ENCODE measurements at regions of chr9 and their contacts with region 1.

Region 1: DNA sequence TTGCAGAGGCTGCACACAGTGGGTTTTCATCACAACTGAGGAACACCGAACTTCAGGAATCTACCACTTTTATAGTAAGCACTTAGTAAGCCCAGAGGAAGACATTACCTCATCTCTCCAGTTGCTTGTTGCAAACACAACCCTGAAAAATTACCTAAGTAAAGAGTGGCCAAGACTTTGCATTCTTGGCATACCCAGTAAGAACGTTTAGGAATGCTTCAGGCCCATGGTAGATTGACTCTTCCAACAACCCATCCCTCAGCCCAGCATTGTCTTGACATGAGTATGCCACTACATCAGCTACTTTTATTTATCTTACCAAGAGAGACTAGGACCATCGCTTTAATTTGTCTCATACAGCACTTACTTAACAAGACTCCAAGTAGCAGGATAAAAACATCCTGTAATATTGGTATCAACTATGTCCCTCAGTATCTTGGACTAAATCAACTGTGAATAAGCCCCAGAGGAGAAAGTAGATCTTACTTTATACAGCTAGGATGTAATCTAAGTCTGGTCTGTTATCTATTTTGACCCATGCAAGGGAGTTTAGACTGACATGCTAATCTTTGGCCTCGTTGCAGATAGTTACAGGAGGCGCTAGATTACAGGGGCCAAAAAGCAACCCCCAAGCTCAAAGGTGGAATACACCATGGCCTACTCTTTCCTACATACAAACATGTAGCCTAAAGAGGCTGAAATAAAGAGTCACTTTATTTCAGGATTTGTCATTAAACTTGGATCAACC is 114.9 kb downstream of the INVS start:
- DNase-seq: no peak
- ATAC-seq: no peak
- H3K4me3 ChIP-seq: no peak overlapping the region
- H3K4me3 Mint-ChIP-seq: no peak overlapping the region
- H3K27ac ChIP-seq: no peak overlapping the region
- H3K27ac Mint-ChIP-seq: no peak overlapping the region
- H3K4me1 ChIP-seq: no peaks in the 10 kb centered on the region
- H3K4me1 Mint-ChIP-seq: peaks cover 8 to 11% (median 10%) of the 10 kb centered on the region in 3 donors
- H3K27me3 ChIP-seq: no peaks in the 10 kb centered on the region
- H3K27me3 Mint-ChIP-seq: no peaks in the 10 kb centered on the region

Region 2: GRCh38 chr9:100111235-100111634 is 102.7 kb before region 1 on chr9:
- CTCF ChIA-PET with region 1: no interaction called
- POLR2A ChIA-PET with region 1: interaction called in 1 of 2 experiments, 17 read pairs
- DNase-seq: no peak
- ATAC-seq: no peak
- H3K4me3 ChIP-seq: no peak overlapping the region
- H3K4me3 Mint-ChIP-seq: no peak overlapping the region
- H3K27ac ChIP-seq: no peak overlapping the region
- H3K27ac Mint-ChIP-seq: no peak overlapping the region
- H3K4me1 ChIP-seq: no peaks in the 10 kb centered on the region
- H3K4me1 Mint-ChIP-seq: peaks cover 7 to 13% (median 10%) of the 10 kb centered on the region in 3 donors
- H3K27me3 ChIP-seq: no peaks in the 10 kb centered on the region
- H3K27me3 Mint-ChIP-seq: no peaks in the 10 kb centered on the region

Region 3: GRCh38 chr9:100196215-100196614 is 17.7 kb before region 1 on chr9:
- CTCF ChIA-PET with region 1: no interaction called
- POLR2A ChIA-PET with region 1: no interaction called
- DNase-seq: no peak
- ATAC-seq: no peak
- H3K4me3 ChIP-seq: no peak overlapping the region
- H3K4me3 Mint-ChIP-seq: no peak overlapping the region
- H3K27ac ChIP-seq: no peak overlapping the region
- H3K27ac Mint-ChIP-seq: no peak overlapping the region
- H3K4me1 ChIP-seq: no peaks in the 10 kb centered on the region
- H3K4me1 Mint-ChIP-seq: no peaks in the 10 kb centered on the region
- H3K27me3 ChIP-seq: no peaks in the 10 kb centered on the region
- H3K27me3 Mint-ChIP-seq: no peaks in the 10 kb centered on the region

Region 4: GRCh38 chr9:100309992-100310391 is 96.1 kb after region 1 on chr9:
- CTCF ChIA-PET with region 1: no interaction called
- POLR2A ChIA-PET with region 1: no interaction called
- DNase-seq: no peak
- ATAC-seq: no peak
- H3K4me3 ChIP-seq: no peak overlapping the region
- H3K4me3 Mint-ChIP-seq: no peak overlapping the region
- H3K27ac ChIP-seq: no peak overlapping the region
- H3K27ac Mint-ChIP-seq: no peak overlapping the region
- H3K4me1 ChIP-seq: no peaks in the 10 kb centered on the region
- H3K4me1 Mint-ChIP-seq: peaks cover 26 to 31% (median 30%) of the 10 kb centered on the region in 3 donors
- H3K27me3 ChIP-seq: no peaks in the 10 kb centered on the region
- H3K27me3 Mint-ChIP-seq: no peaks in the 10 kb centered on the region

Region 5: GRCh38 chr9:100394816-100395215 is 180.9 kb after region 1 on chr9:
- CTCF ChIA-PET with region 1: no interaction called
- POLR2A ChIA-PET with region 1: no interaction called
- DNase-seq: no peak
- ATAC-seq: no peak
- H3K4me3 ChIP-seq: no peak overlapping the region
- H3K4me3 Mint-ChIP-seq: no peak overlapping the region
- H3K27ac ChIP-seq: no peak overlapping the region
- H3K27ac Mint-ChIP-seq: no peak overlapping the region
- H3K4me1 ChIP-seq: no peaks in the 10 kb centered on the region
- H3K4me1 Mint-ChIP-seq: no peaks in the 10 kb centered on the region
- H3K27me3 ChIP-seq: no peaks in the 10 kb centered on the region
- H3K27me3 Mint-ChIP-seq: no peaks in the 10 kb centered on the region